ENCODE measurements at regions of chr1 and their contacts with region 1.

Region 1: DNA sequence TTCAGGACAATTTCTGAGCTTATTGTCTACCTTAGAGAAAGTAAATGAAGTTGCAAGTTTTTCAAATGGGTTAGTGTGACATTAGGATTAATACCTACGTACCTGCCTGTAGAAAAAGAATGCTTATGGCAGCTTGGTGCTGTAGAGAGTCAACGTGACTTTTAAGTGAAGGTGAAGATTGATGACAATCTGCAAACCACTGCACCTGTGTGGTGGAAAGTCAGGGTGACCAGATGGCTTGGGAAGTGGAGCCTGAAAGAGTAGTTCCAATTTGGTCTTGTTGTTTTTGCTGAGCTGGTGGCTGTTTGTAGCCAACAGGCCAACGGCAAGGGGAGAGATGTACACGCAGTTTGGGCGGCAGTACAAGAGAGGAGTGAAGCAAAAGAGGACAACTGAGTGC is 78.0 kb upstream of the JAK1 start:
- DNase-seq: no peak
- H3K4me3 ChIP-seq: no peak overlapping the region
- H3K27ac ChIP-seq: no peak overlapping the region
- H3K4me1 ChIP-seq: peaks cover 35% of the 10 kb centered on the region
- H3K27me3 ChIP-seq: no peaks in the 10 kb centered on the region
- CTCF ChIP-seq: no peak

Region 2: DNA sequence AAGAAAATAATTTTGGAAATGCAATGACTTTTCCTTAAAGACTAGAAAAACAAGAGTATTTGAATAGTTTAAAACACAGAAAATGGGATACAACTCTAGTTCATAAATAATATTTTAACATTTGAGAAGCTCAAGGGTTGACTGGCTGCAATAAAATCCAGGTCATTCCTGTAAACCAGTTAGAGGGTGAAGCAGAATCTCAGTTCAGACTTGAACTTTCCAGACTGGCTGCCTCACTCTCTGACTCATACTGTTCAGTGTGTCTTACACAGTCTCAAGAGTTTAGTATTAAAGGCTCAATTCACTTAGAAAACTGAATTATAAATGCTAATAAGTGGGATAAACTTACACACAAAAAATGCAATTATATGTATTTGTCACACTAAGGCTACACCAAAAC is 209.6 kb before region 1 on chr1:
- CTCF ChIA-PET with region 1: no interaction called
- POLR2A ChIA-PET with region 1: no interaction called
- intact Hi-C with region 1: loop called (anchors 5 kb)
- DNase-seq: peak; percentile 37
- H3K4me3 ChIP-seq: no peak overlapping the region
- H3K27ac ChIP-seq: peak overlapping the region; percentile 39
- H3K4me1 ChIP-seq: peaks cover 30% of the 10 kb centered on the region
- H3K27me3 ChIP-seq: no peaks in the 10 kb centered on the region
- CTCF ChIP-seq: no peak

Measured in A673 (cell line).